Psoas muscle (tissue), 8 donors: ENCODE measurements at regions of chr4 and their contacts with region 1.

Region 1: GRCh38 chr4:125314676-125315575 is at the start of gene FAT4:
- DNase-seq: peak; percentile 95 to 97
- ATAC-seq: peak; percentile 93 to 96 (median 94)
- H3K4me3 ChIP-seq: peak within 1 kb of the TSS; percentile 93
- H3K27ac ChIP-seq: peak within 1 kb of the TSS; percentile 81
- H3K4me1 ChIP-seq: peaks cover 6% of the 10 kb centered on the region
- H3K27me3 ChIP-seq: no peaks in the 10 kb centered on the region
- CTCF ChIP-seq: peak; percentile 17
- total RNA-seq, gene FAT4: 1.6 to 8.4 (median 3.0) TPM

Region 2: GRCh38 chr4:125389713-125390112 is 74.8 kb after region 1 on chr4:
- intact Hi-C with region 1: loop called in 1 of 2 experiments (anchors 5 kb)
- DNase-seq: no peak
- ATAC-seq: peak in 3 of 4 donors; percentile 51 to 68 (median 54)
- H3K4me3 ChIP-seq: no peak overlapping the region
- H3K27ac ChIP-seq: peak overlapping the region; percentile 34
- H3K4me1 ChIP-seq: peaks cover 17% of the 10 kb centered on the region
- H3K27me3 ChIP-seq: no peaks in the 10 kb centered on the region
- CTCF ChIP-seq: no peak

Region 3: GRCh38 chr4:125432104-125432503 is 117.2 kb after region 1 on chr4:
- intact Hi-C with region 1: loop called (anchors 10 kb)
- DNase-seq: no peak
- ATAC-seq: peak in 3 of 4 donors; percentile 21 to 55 (median 37)
- H3K4me3 ChIP-seq: no peak overlapping the region
- H3K27ac ChIP-seq: no peak overlapping the region
- H3K4me1 ChIP-seq: no peaks in the 10 kb centered on the region
- H3K27me3 ChIP-seq: no peaks in the 10 kb centered on the region
- CTCF ChIP-seq: peak; percentile 13

Region 4: GRCh38 chr4:125744891-125745364 is 430.0 kb after region 1 on chr4:
- intact Hi-C with region 1: loop called (anchors 2 to 5 kb)
- DNase-seq: peak in 1 of 2 donors; percentile 47
- ATAC-seq: no peak
- H3K4me3 ChIP-seq: no peak overlapping the region
- H3K27ac ChIP-seq: no peak overlapping the region
- H3K4me1 ChIP-seq: no peaks in the 10 kb centered on the region
- H3K27me3 ChIP-seq: no peaks in the 10 kb centered on the region
- CTCF ChIP-seq: no peak

Region 5: GRCh38 chr4:125750828-125751466 is 436.0 kb after region 1 on chr4:
- intact Hi-C with region 1: loop called in 1 of 2 experiments (anchors 5 kb)
- DNase-seq: no peak
- ATAC-seq: peak in 2 of 4 donors; percentile 30 to 65
- H3K4me3 ChIP-seq: no peak overlapping the region
- H3K27ac ChIP-seq: no peak overlapping the region
- H3K4me1 ChIP-seq: no peaks in the 10 kb centered on the region
- H3K27me3 ChIP-seq: no peaks in the 10 kb centered on the region
- CTCF ChIP-seq: peak; percentile 37